Activated CD8-positive, alpha-beta T cell treated with anti-CD3 and anti-CD28 coated beads for 36 hours (primary cell): ENCODE measurements at regions of chr16 and their contacts with region 1.

Region 1: DNA sequence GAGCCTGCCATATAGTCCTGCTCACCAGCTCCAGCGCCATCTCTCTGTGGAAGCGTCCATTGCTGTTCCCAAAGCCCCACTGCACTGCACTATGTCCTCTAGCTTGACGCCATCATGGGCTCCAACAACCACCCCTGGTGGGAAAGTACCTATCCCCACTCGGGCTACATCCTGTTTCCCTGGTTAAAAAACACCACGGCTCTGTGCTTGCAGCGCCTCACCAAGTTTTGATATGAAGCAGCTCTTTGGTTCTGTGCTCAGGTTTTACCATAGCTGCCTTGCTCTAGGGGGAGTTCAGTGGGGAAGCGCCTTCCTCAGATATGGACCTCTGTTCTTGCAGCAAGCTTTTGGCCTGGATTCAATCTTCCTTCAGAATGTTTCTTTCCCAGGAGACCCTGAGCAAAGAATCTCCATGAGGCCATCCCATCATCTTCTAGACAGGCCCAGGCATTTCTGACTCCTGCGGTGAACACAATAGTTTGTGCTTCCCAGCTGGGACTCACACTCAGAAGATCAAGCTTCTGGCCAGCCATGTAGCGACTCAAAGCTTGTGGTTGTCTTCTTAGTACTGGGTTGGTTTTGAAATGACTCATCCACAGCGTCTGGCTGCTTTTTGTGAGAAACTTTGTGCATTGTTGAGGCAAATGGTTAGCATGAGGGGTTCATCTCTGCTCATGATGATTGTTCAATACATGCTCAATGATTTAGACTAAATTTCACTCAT is 39.5 kb downstream of the DYNLRB2 start:
- DNase-seq: peak; percentile 89
- ATAC-seq: peak; percentile 90
- H3K4me3 Mint-ChIP-seq: peak overlapping the region; percentile 51
- H3K27ac Mint-ChIP-seq: peak overlapping the region; percentile 97
- H3K4me1 Mint-ChIP-seq: peaks cover 53% of the 10 kb centered on the region
- H3K27me3 Mint-ChIP-seq: no peaks in the 10 kb centered on the region
- CTCF ChIP-seq: no peak

Region 2: GRCh38 chr16:80540516-80541272 is 39.6 kb before region 1 on chr16 and contains the start of gene DYNLRB2:
- CTCF ChIA-PET with region 1: interaction called, 5 read pairs
- POLR2A ChIA-PET with region 1: interaction called, 5 read pairs
- intact Hi-C with region 1: loop called (anchors 5 kb)
- DNase-seq: peak; percentile 92
- ATAC-seq: peak; percentile 95
- H3K4me3 Mint-ChIP-seq: peak within 1 kb of the TSS; percentile 96
- H3K27ac Mint-ChIP-seq: peak within 1 kb of the TSS; percentile 98
- H3K4me1 Mint-ChIP-seq: peaks cover 15% of the 10 kb centered on the region
- H3K27me3 Mint-ChIP-seq: peaks cover 1% of the 10 kb centered on the region
- CTCF ChIP-seq: no peak
- total RNA-seq, gene DYNLRB2: not detected

Region 3: DNA sequence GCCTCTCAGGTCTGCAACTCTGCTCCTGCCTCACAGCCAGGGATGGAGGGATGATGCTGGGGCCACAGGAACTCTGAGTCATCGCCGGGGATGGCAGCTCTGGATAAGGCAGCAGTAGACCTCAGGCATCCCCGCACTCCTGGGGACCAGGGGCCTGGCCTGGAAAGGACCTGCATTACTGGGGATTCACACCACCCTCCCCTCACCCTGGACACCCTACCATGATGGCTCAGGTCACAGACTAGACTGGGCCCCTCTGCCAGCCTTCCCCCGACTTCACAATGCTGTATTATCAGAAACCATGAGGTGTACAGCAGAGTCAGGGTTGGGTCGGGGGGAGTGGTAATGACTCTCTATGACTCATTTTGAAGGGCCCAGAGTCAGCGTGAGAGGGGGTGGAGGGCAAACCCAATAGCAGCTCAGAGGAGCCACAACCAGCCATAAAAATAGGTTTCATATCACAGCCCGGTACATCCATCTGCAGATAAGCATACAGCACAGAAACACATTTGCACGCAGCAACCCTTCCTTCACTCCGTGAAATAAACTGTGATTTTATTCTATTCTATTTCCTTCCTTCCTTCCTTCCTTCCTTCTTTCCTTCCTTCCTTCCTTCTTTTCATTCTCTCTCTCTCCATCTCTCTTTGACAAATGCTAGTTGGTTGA is 10.7 kb before region 1 on chr16:
- CTCF ChIA-PET with region 1: interaction called, 6 read pairs
- POLR2A ChIA-PET with region 1: interaction called, 5 read pairs
- intact Hi-C with region 1: loop called (anchors 1 kb)
- DNase-seq: peak; percentile 94
- ATAC-seq: peak; percentile 98
- H3K4me3 Mint-ChIP-seq: peak overlapping the region; percentile 35
- H3K27ac Mint-ChIP-seq: peak overlapping the region; percentile 89
- H3K4me1 Mint-ChIP-seq: peaks cover 34% of the 10 kb centered on the region
- H3K27me3 Mint-ChIP-seq: no peaks in the 10 kb centered on the region
- CTCF ChIP-seq: no peak

Region 4: DNA sequence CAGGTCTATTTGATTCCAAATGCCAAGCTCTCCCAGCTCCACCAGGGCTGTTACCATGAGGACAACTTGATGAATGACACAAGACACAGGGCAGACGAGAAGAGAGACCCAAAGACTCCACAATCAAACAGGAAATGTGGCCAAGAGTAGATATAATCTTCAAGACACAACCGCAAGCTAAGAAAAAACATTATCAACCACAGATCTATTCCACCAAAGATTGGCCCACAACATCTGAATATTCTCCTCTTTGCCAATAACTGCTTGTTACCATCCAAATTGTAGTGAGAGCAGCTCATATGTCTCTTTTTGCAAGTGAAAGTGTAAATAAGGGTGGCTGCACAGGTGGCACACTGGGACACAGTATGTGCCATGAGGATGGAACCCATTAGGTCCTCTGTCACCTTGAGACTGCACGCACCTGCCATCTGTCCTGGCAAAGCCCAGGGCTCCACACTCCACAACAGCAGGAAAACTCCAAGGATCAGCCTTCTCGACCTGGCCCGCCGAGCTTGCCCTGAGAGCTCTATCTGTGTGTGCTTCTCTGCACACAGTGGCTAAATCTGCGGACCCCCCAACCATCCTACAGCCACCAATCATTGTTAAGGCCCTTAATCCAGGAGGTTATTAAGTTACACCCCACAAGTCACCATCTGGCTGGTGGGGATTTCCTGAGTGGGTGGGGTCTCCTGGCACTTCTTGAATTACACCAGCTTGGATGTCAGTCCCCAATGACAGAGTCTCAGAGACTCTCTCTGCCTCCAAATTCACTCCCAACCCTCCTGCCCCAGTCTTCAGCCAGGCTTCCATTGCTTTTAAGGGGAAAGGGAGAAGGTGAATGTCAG is 11.0 kb after region 1 on chr16:
- CTCF ChIA-PET with region 1: interaction called, 9 read pairs
- POLR2A ChIA-PET with region 1: interaction called, 11 read pairs
- intact Hi-C with region 1: no loop called
- DNase-seq: peak; percentile 50
- ATAC-seq: peak; percentile 85
- H3K4me3 Mint-ChIP-seq: peak overlapping the region; percentile 35
- H3K27ac Mint-ChIP-seq: peak overlapping the region; percentile 53
- H3K4me1 Mint-ChIP-seq: peaks cover 24% of the 10 kb centered on the region
- H3K27me3 Mint-ChIP-seq: peaks cover 17% of the 10 kb centered on the region
- CTCF ChIP-seq: no peak

Region 5: DNA sequence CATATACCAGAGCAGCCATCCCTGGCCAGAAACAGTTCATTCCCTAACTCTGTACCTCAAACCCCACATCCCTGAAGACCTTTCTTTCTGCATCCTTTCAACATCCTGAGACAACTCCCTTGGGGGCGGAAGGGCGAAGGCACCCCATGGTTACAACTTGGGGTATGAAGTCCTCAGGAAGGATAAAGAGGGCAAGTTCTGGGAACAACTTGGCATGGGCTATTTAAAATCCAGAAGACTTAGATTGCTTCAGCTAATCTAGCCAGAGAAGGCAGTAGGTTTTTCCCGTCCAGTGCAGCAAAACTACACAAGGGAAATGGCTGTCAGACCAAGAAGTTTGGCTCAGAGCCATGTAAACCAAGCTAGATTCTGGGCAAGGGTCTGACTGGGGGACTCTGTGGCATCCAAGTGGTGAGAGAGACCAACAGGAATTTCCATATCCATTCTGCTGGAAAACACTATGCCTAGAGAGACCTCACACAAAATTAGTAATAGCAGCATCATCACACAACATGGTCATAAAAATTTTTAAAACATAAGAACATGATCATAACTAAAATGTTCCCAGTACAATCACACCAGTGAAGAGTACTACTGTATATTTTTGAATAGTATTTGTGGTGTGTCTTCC is 111.0 kb after region 1 on chr16:
- CTCF ChIA-PET with region 1: no interaction called
- POLR2A ChIA-PET with region 1: no interaction called
- intact Hi-C with region 1: loop called (anchors 5 kb)
- DNase-seq: no peak
- ATAC-seq: no peak
- H3K4me3 Mint-ChIP-seq: no peak overlapping the region
- H3K27ac Mint-ChIP-seq: no peak overlapping the region
- H3K4me1 Mint-ChIP-seq: peaks cover 40% of the 10 kb centered on the region
- H3K27me3 Mint-ChIP-seq: no peaks in the 10 kb centered on the region
- CTCF ChIP-seq: no peak

Region 6: GRCh38 chr16:80751190-80751589 is 170.9 kb after region 1 on chr16:
- CTCF ChIA-PET with region 1: no interaction called
- POLR2A ChIA-PET with region 1: no interaction called
- intact Hi-C with region 1: loop called (anchors 10 kb)
- DNase-seq: no peak
- ATAC-seq: no peak
- H3K4me3 Mint-ChIP-seq: no peak overlapping the region
- H3K27ac Mint-ChIP-seq: no peak overlapping the region
- H3K4me1 Mint-ChIP-seq: peaks cover 12% of the 10 kb centered on the region
- H3K27me3 Mint-ChIP-seq: no peaks in the 10 kb centered on the region
- CTCF ChIP-seq: no peak

Region 7: DNA sequence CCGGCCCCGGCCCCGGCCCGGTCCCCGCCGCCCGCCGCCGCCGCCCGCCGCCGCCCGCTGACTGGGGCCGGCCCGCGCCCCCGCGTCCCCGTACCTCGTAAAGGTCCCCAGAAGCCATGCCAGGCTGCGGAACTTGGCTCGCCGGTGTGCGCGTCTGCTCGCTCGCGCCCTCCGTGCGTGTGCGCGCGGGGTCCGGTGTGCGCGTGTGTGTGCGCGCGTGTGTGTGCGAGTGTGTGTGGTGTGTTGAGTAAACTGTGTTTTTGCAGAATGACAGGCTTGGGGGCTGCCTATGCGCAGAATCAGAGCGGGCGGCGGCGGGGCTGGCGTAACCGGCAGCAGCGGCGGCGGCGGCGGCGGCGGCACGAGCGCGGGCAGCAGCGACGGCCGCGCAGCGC is 223.8 kb after region 1 on chr16:
- CTCF ChIA-PET with region 1: interaction called, 5 read pairs
- POLR2A ChIA-PET with region 1: interaction called, 3 read pairs
- intact Hi-C with region 1: loop called (anchors 2 kb)
- DNase-seq: peak; percentile 70
- ATAC-seq: peak; percentile 46
- H3K4me3 Mint-ChIP-seq: peak overlapping the region; percentile 89
- H3K27ac Mint-ChIP-seq: peak overlapping the region; percentile 87
- H3K4me1 Mint-ChIP-seq: peaks cover 36% of the 10 kb centered on the region
- H3K27me3 Mint-ChIP-seq: peaks cover 16% of the 10 kb centered on the region
- CTCF ChIP-seq: no peak